AG04449 (cell line): ENCODE measurements at regions of chr1 and their contacts with region 1.

Region 1: DNA sequence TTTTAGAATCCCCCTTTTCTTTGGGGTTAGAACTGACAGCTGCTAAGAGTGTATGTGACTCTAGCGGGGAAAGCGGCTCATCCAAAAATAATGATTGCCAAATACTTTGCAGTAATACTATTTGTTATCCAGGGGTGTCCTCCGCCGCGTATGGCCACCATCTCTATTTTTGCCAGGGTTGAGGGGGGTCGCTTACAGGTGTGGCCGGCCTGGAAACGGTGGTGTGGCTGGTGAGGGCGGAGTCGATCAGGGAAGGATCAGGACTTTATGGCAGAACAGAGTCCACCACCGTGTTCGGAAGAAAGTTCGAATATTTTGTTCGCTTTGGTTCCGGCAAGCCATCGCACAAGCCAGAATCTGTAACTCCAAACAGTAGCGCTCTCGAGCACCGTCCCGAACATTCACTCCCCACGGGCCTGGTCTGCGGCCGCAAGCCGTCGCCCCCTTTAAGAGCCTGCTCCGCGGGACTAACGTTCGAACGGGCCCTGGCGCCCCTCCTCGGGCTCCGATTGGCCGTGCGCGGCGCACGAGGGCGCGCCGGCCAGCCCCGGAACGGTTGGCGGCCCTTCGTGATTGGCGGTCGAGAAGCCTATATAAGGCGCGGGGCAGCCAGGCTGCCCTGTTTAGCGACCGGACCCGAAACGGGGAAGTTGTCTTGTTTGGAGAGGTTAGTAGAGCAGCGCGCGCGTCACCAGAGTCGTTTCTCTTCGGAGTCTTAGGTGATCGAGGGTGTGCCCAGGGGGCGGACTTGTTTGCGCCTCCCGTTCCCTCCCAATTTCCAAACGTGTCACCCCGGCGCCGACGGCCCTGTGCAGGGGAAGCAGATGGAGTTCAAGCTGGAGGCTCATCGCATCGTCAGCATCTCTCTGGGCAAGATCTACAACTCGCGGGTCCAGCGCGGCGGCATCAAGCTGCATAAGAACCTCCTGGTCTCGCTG is at the start of gene IER5:
- DNase-seq: peak; percentile 72
- H3K4me3 ChIP-seq: peak within 1 kb of the TSS; percentile 90
- CTCF ChIP-seq: no peak

Region 2: GRCh38 chr1:181077576-181078242 is 10.6 kb before region 1 on chr1:
- CTCF ChIA-PET with region 1: interaction called, 5 read pairs
- POLR2A ChIA-PET with region 1: interaction called, 23 read pairs
- DNase-seq: no peak
- H3K4me3 ChIP-seq: no peak overlapping the region
- CTCF ChIP-seq: no peak

Region 3: GRCh38 chr1:181105134-181106021 is 17.0 kb after region 1 on chr1:
- CTCF ChIA-PET with region 1: interaction called, 5 read pairs
- POLR2A ChIA-PET with region 1: interaction called, 40 read pairs
- DNase-seq: no peak
- H3K4me3 ChIP-seq: peak overlapping the region; percentile 76
- CTCF ChIP-seq: no peak

Region 4: DNA sequence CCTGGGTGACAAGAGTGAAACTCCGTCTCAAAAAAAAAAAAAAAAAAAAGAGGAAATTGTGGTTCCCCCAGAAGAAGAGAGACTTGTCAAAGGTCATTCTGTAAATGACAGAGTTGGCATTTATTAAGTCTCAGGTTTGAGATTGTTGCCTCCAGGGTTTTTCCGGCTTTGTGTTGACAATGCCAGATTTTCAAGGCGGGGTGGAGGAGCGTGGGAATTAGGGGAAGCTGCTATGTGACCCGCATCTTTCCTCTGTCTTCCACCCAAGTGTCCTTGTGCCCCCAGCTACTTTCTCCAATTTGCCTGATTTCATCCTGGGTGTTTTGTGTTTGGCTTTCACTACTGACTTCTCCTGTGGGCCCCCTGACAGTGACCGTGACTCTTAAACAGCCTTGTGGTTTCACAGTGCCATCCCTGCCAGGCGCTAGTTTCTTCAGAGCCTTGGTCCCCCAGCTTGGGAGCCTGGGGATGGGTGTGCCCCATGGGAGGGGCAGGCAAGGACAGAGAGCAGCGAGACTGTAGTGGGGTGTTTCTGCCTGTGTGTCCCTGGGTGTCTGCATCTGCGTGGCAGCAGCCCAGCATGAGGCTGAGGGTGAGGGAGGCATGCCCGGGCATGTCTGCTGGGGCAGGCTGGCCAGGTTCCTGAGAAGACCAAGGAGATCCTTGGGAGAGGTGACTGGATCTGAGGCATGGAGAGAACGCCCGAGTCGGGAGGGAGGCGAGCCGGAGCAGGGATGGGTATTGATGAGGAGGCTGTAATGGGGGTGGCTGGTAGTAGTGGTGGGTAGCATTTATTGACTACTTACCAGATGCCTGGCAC is 46.4 kb after region 1 on chr1:
- CTCF ChIA-PET with region 1: interaction called, 148 read pairs
- POLR2A ChIA-PET with region 1: interaction called, 27 read pairs
- DNase-seq: peak; percentile 68
- H3K4me3 ChIP-seq: no peak overlapping the region
- CTCF ChIP-seq: no peak

Region 5: GRCh38 chr1:181264843-181265242 is 176.5 kb after region 1 on chr1:
- CTCF ChIA-PET with region 1: no interaction called
- POLR2A ChIA-PET with region 1: no interaction called
- DNase-seq: no peak
- H3K4me3 ChIP-seq: no peak overlapping the region
- CTCF ChIP-seq: no peak

Region 6: GRCh38 chr1:181296180-181296579 is 207.8 kb after region 1 on chr1:
- CTCF ChIA-PET with region 1: no interaction called
- POLR2A ChIA-PET with region 1: no interaction called
- DNase-seq: no peak
- H3K4me3 ChIP-seq: no peak overlapping the region
- CTCF ChIP-seq: no peak

Region 7: DNA sequence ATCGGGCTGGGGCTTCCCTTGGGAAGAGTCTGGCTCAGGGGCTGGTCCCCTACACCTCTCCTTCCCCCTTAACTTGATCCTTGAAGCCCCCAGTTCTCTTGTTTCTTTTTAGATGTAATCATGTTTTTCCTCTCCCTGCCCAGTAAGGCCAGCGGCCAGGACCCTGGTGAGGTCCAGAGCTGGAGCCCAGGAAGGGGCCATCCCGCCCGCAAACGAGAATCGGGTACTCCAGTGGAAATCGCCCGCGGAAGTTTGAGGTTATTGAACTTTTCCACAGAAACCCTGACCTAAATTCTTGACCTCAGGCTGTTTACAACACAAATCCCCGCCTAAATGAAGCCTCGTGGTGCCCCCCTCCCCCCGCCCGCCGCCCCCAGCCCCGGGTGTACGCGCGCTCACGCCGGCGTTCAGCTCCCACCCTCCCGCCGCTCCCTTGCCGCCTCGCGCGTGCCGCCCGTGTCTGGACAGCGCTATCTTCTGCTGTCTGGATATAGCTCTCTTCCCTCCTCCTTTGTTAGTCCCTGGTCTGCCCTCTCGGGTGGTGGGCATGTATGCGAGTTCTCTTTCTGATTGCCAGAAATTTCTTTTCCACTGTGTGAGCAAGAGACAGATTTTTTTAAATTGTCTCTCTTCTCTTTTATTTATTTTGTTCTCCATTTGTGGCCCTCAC is 229.0 kb after region 1 on chr1:
- CTCF ChIA-PET with region 1: no interaction called
- POLR2A ChIA-PET with region 1: no interaction called
- DNase-seq: no peak
- H3K4me3 ChIP-seq: no peak overlapping the region
- CTCF ChIP-seq: no peak